Panc1 (cell line): ENCODE measurements at regions of chr5 and their contacts with region 1.

Region 1: GRCh38 chr5:170225326-170226128 is 7.3 kb upstream of the C5orf58 start:
- DNase-seq: peak; percentile 36
- ATAC-seq: peak; percentile 94
- H3K4me3 ChIP-seq: no peak overlapping the region
- H3K27ac ChIP-seq: no peak overlapping the region
- H3K4me1 ChIP-seq: 0 out of 2 replicates have a peak, but pooled peaks cover 3% of the 10 kb centered on the region
- H3K27me3 ChIP-seq: peaks cover 2% of the 10 kb centered on the region; the same call in 1 of the 2 replicates
- CTCF ChIP-seq: peak; percentile 88

Region 2: DNA sequence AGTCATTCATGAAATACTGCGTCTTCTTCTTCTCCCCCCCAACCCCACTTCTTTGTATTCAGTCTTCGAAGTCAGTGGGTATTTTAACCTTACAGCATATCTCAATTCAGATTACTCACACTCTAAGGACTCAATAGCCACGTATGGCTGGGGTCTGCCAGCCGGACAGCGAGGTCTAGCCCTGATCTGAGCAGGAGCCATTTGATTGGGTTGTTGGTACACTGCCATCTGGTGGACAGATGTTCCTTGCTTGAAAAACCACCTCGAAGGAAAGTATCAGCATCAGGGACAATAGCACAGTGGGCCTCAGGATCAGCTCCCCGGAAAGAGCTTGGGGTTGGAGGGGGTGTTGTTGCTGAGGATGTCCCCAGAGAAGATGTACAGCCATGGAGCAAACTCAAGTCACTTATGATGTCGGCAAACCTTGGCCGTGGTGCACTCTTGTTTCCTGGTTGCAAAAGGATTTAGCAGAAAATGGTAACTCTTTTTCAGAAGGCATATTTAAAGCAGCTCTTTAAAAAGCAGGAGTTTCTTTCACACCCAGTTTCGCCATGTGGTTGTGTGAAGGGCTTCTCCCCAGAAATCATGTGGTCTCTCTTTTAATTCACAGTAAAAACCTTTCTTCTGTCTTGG is 195.4 kb after region 1 on chr5:
- CTCF ChIA-PET with region 1: interaction called, 3 read pairs
- POLR2A ChIA-PET with region 1: no interaction called
- in situ Hi-C with region 1: no loop called
- intact Hi-C with region 1: loop called (anchors 1 kb)
- DNase-seq: peak; percentile 25
- ATAC-seq: peak; percentile 88; the same call in 1 of the 2 replicates
- H3K4me3 ChIP-seq: no peak overlapping the region
- H3K27ac ChIP-seq: no peak overlapping the region
- H3K4me1 ChIP-seq: no peaks in the 10 kb centered on the region
- H3K27me3 ChIP-seq: no peaks in the 10 kb centered on the region; the same call in none of the 2 replicates
- CTCF ChIP-seq: peak; percentile 81

Region 3: DNA sequence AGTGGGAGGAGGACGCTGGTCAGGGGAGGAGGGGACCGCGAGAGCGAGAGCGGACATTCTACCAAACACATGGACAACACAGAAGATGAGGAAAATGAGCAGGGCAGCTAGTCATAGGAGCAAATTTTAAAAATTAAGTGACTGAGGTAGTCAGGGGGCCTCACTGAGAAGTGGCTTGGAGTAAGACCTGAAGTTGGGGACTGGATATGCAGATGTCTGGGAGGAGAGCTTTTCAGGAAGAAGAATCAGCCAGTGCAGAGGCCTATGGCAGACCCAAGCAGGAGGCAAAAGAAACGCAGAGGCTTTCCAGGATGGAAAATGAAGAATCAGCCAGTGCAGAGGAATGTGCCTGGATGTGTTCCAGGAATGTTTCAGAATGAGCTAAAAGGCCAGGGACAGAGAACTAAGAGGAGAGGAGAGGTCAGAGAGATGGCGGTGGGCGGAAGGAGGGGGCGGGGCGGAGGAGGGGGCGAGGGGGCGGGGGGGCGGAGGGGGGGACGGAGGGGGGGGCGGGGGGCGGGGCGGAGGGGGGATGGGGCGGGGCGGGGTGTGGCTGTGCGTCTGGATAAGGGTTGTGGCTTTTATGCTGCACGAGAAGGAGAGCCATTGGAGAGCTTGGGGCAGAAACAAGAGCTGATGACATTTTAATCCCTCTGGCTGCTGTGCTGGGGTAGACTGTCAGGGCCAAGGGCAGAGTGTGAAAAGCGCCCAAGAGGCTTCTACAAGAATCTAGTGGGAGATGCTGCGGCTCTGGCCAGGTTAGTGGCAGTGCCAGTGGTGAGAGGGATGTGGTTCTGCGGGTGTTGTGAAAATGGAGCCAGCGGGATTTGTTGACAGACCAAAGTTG is 407.9 kb after region 1 on chr5:
- CTCF ChIA-PET with region 1: no interaction called
- POLR2A ChIA-PET with region 1: no interaction called
- in situ Hi-C with region 1: no loop called
- intact Hi-C with region 1: loop called (anchors 5 kb)
- DNase-seq: peak; percentile 27
- ATAC-seq: peak; percentile 44
- H3K4me3 ChIP-seq: peak overlapping the region; percentile 20 to 47
- H3K27ac ChIP-seq: no peak overlapping the region
- H3K4me1 ChIP-seq: peaks cover 3% of the 10 kb centered on the region
- H3K27me3 ChIP-seq: no peaks in the 10 kb centered on the region
- CTCF ChIP-seq: peak; percentile 44